ENCODE measurements at regions of chr1 and their contacts with region 1.

Region 1: GRCh38 chr1:243325305-243325890 is 69.6 kb downstream of the SDCCAG8 start:
- DNase-seq: no peak
- H3K4me3 Mint-ChIP-seq: no peak overlapping the region
- H3K27ac Mint-ChIP-seq: no peak overlapping the region
- H3K4me1 Mint-ChIP-seq: no peaks in the 10 kb centered on the region
- H3K27me3 Mint-ChIP-seq: no peaks in the 10 kb centered on the region

Region 2: GRCh38 chr1:241895013-241895412 is 1430.4 kb before region 1 on chr1:
- intact Hi-C with region 1: loop called (anchors 10 kb)
- DNase-seq: no peak
- H3K4me3 Mint-ChIP-seq: no peak overlapping the region
- H3K27ac Mint-ChIP-seq: no peak overlapping the region
- H3K4me1 Mint-ChIP-seq: no peaks in the 10 kb centered on the region
- H3K27me3 Mint-ChIP-seq: no peaks in the 10 kb centered on the region

Region 3: GRCh38 chr1:242017584-242018233 is 1307.7 kb before region 1 on chr1:
- intact Hi-C with region 1: loop called (anchors 10 kb)
- DNase-seq: no peak
- H3K4me3 Mint-ChIP-seq: no peak overlapping the region
- H3K27ac Mint-ChIP-seq: no peak overlapping the region
- H3K4me1 Mint-ChIP-seq: no peaks in the 10 kb centered on the region
- H3K27me3 Mint-ChIP-seq: peaks cover 1% of the 10 kb centered on the region

Region 4: GRCh38 chr1:242454262-242455045 is 870.9 kb before region 1 on chr1:
- intact Hi-C with region 1: loop called (anchors 1 kb)
- DNase-seq: no peak
- H3K4me3 Mint-ChIP-seq: no peak overlapping the region
- H3K27ac Mint-ChIP-seq: no peak overlapping the region
- H3K4me1 Mint-ChIP-seq: no peaks in the 10 kb centered on the region
- H3K27me3 Mint-ChIP-seq: no peaks in the 10 kb centered on the region

Region 5: GRCh38 chr1:242876030-242876429 is 449.4 kb before region 1 on chr1:
- intact Hi-C with region 1: loop called (anchors 1 kb)
- DNase-seq: no peak
- H3K4me3 Mint-ChIP-seq: no peak overlapping the region
- H3K27ac Mint-ChIP-seq: no peak overlapping the region
- H3K4me1 Mint-ChIP-seq: no peaks in the 10 kb centered on the region
- H3K27me3 Mint-ChIP-seq: no peaks in the 10 kb centered on the region